ENCODE measurements at regions of chr4 and their contacts with region 1.

Region 1: GRCh38 chr4:153083447-153083947 is 120.7 kb upstream of the TRIM2 start:
- DNase-seq: peak; percentile 70
- H3K4me3 Mint-ChIP-seq: peak overlapping the region; percentile 28
- H3K27ac Mint-ChIP-seq: no peak overlapping the region
- H3K4me1 Mint-ChIP-seq: peaks cover 43% of the 10 kb centered on the region
- H3K27me3 Mint-ChIP-seq: peaks cover 2% of the 10 kb centered on the region

Region 2: DNA sequence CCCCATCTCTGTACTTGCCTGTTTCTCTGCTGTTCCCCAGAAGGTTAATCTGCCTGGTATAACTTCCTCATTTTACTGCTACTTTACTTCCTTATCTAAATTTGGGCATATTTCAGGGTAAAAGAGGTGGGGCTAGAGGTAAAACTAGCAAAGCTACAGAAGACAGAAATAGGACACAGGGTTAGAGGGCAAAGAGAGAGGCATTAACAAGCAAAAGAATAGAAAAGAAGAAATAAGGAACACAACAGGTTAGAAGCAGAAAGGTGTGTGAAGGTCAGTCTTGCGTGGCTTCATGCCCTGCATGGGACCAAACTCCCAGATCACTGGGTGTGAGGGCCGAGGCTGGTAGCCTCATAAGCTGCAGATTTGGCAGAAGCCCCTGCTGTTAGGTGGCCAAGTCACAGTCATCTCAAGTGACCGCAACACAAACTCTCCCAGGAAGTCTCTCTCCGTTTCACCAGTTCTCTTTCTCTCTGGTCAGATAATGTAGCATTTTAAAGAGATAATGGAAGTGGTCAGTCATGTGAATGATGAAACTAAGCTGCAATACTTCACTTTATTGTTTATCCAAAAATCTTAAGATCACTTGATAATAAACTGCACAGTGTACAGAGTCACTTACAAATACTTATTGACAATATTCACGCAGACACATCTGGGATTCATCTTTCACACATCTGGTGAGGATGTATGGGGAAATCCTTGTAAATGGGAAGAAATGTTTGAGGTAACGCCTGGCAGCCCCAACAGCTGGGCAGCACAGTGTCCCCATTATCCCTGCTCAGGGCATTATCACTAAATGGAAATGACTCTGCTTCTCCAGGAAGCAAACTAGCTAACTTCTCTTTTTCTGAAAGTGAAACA is 420.1 kb before region 1 on chr4:
- CTCF ChIA-PET with region 1: no interaction called
- intact Hi-C with region 1: no loop called
- DNase-seq: no peak
- H3K4me3 Mint-ChIP-seq: no peak overlapping the region
- H3K27ac Mint-ChIP-seq: no peak overlapping the region
- H3K4me1 Mint-ChIP-seq: peaks cover 37% of the 10 kb centered on the region
- H3K27me3 Mint-ChIP-seq: no peaks in the 10 kb centered on the region

Region 3: DNA sequence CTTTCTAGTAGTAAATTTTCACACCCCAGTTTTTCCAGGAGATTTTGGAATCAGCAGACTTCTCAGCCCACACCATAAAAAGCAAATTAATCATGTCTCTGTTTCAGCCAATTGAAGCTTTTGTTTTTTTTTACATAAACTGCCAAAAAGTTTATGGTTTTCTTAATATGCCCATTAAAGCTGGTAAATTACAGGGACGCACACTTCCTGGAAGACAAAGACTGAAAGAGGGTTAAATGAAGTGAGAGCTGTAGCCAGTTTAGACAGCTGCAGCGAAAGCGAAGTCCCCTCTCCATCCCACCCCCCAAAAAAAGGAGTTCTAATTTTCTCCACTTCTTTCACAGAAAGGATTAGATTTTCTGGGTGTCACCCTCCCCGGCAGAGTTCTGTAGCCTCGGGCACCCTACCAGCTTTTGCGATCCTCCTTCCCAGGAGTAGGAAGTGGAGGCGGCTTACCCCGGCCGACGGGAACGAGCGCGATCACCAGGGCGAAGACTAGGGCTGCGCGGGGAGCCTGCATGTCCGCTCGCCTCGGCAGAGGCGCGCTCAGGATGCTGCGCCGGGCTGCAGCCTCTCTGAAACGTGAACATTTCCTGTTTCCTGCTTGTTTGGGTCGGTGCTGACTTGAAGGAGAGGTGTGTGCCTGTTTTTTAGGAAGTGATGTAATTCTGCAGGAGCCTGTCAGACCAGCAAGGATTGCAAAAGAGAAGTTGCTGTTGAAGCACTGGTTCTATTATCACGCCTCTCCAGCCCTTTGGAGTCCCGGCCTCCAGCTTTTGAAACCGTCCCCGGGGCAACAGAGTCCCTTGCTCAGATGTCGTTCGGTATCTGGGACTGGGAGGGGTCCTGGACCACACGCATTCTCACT is 403.8 kb before region 1 on chr4 and contains the start of gene TMEM154:
- CTCF ChIA-PET with region 1: no interaction called
- intact Hi-C with region 1: loop called (anchors 10 kb)
- DNase-seq: peak; percentile 83
- H3K4me3 Mint-ChIP-seq: peak within 1 kb of the TSS; percentile 87
- H3K27ac Mint-ChIP-seq: peak within 1 kb of the TSS; percentile 85
- H3K4me1 Mint-ChIP-seq: peaks cover 59% of the 10 kb centered on the region
- H3K27me3 Mint-ChIP-seq: no peaks in the 10 kb centered on the region
- total RNA-seq, gene TMEM154: 17.3 to 20.4 TPM

Region 4: GRCh38 chr4:152937336-152938236 is 145.9 kb before region 1 on chr4:
- CTCF ChIA-PET with region 1: interaction called, 5 read pairs
- intact Hi-C with region 1: loop called (anchors 1 kb)
- DNase-seq: no peak
- H3K4me3 Mint-ChIP-seq: peak overlapping the region; percentile 67
- H3K27ac Mint-ChIP-seq: no peak overlapping the region
- H3K4me1 Mint-ChIP-seq: peaks cover 16% of the 10 kb centered on the region
- H3K27me3 Mint-ChIP-seq: peaks cover 44% of the 10 kb centered on the region

Region 5: GRCh38 chr4:153115322-153116290 is 32.1 kb after region 1 on chr4:
- CTCF ChIA-PET with region 1: interaction called, 45 read pairs
- intact Hi-C with region 1: loop called (anchors 1 kb)
- DNase-seq: peak; percentile 90
- H3K4me3 Mint-ChIP-seq: no peak overlapping the region
- H3K27ac Mint-ChIP-seq: no peak overlapping the region
- H3K4me1 Mint-ChIP-seq: peaks cover 8% of the 10 kb centered on the region
- H3K27me3 Mint-ChIP-seq: no peaks in the 10 kb centered on the region

Region 6: GRCh38 chr4:153153339-153153871 is 69.9 kb after region 1 on chr4:
- CTCF ChIA-PET with region 1: interaction called, 3 read pairs
- intact Hi-C with region 1: loop called (anchors 1 kb)
- DNase-seq: peak; percentile 91
- H3K4me3 Mint-ChIP-seq: peak overlapping the region; percentile 80
- H3K27ac Mint-ChIP-seq: peak overlapping the region; percentile 86
- H3K4me1 Mint-ChIP-seq: peaks cover 58% of the 10 kb centered on the region
- H3K27me3 Mint-ChIP-seq: no peaks in the 10 kb centered on the region

Region 7: GRCh38 chr4:153750197-153750817 is 666.8 kb after region 1 on chr4:
- CTCF ChIA-PET with region 1: interaction called, 5 read pairs
- intact Hi-C with region 1: loop called (anchors 5 kb)
- DNase-seq: peak; percentile 87
- H3K4me3 Mint-ChIP-seq: no peak overlapping the region
- H3K27ac Mint-ChIP-seq: no peak overlapping the region
- H3K4me1 Mint-ChIP-seq: peaks cover 11% of the 10 kb centered on the region
- H3K27me3 Mint-ChIP-seq: no peaks in the 10 kb centered on the region

Measured in activated naive CD4-positive, alpha-beta T cell treated with anti-CD3 and anti-CD28 coated beads for 36 hours (primary cell).